Naive thymus-derived CD4-positive, alpha-beta T cell (primary cell): ENCODE measurements at regions of chr4 and their contacts with region 1.

Region 1: GRCh38 chr4:118835571-118836300 is at the start of gene SEC24D:
- DNase-seq: peak; percentile 71 to 95 (median 80)
- ATAC-seq: peak; percentile 90
- H3K4me3 ChIP-seq: peak within 1 kb of the TSS; percentile 91
- H3K4me3 Mint-ChIP-seq: peak within 1 kb of the TSS; percentile 87 to 100 (median 99)
- H3K27ac ChIP-seq: peak within 1 kb of the TSS; percentile 87
- H3K27ac Mint-ChIP-seq: peak within 1 kb of the TSS; percentile 86 to 100 (median 96)
- H3K4me1 ChIP-seq: peaks cover 0 to 5% of the 10 kb centered on the region in 2 donors
- H3K4me1 Mint-ChIP-seq: peaks cover 15 to 31% (median 20%) of the 10 kb centered on the region in 7 donors
- H3K27me3 ChIP-seq: no peaks in the 10 kb centered on the region
- H3K27me3 Mint-ChIP-seq: peaks cover 0 to 4% (median 0%) of the 10 kb centered on the region in 5 donors
- total RNA-seq, gene SEC24D: 11.5 to 59.2 (median 16.4) TPM

Region 2: DNA sequence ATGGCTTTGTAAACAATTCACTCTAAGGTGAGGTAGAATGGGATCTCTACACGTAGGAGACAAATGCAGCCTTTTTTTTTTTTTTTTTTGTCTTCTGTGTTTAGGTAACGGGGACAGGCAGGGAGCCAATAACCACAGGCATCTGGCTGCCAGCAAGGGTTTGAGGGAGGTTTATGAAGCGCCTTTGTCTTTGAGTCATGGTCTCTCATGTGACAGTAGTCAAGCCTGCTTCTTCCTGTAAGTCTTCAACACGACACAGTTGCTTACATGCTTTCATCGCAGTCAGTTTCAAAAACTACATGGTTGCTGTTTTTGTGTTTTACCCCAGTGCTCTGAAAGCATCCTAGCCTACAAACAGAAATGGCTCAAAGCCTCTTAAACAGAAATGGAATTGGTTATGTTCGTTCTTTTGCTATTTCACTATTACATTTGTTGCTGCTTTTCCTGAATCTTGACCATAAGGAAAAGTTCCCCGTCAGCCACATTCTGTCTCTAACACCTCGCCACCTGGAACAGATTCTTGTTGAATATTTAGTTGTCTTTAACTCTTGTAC is 278.4 kb before region 1 on chr4:
- CTCF ChIA-PET with region 1: no interaction called
- POLR2A ChIA-PET with region 1: no interaction called
- intact Hi-C with region 1: no loop called
- DNase-seq: no peak
- ATAC-seq: no peak
- H3K4me3 ChIP-seq: no peak overlapping the region
- H3K4me3 Mint-ChIP-seq: no peak overlapping the region
- H3K27ac ChIP-seq: no peak overlapping the region
- H3K27ac Mint-ChIP-seq: no peak overlapping the region
- H3K4me1 ChIP-seq: no peaks in the 10 kb centered on the region
- H3K4me1 Mint-ChIP-seq: no peaks in the 10 kb centered on the region
- H3K27me3 ChIP-seq: no peaks in the 10 kb centered on the region
- H3K27me3 Mint-ChIP-seq: peaks cover 0 to 11% (median 6%) of the 10 kb centered on the region in 5 donors

Region 3: DNA sequence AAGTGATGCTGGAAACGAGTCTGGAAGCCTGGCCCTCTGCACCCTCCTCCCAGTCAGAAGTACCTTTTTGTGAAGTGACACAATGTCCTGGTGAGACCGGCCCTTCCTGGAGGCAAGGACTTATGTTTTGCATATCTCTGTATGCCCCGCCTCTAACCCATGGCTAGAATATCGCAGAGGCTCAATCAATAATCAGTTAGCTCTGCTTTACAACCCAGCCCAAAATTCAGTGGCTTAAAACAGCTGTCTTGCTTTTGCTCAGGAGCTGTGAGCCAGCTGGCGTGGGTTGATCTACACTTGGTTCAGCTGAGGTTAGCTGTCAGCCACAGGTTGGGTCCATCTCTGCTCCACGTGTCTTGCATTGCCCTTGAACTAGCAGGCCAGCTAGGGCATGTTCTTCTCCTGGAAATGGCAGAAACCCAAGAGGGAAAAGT is 249.4 kb before region 1 on chr4:
- CTCF ChIA-PET with region 1: no interaction called
- POLR2A ChIA-PET with region 1: no interaction called
- intact Hi-C with region 1: loop called (anchors 2 to 5 kb)
- DNase-seq: no peak
- ATAC-seq: no peak
- H3K4me3 ChIP-seq: no peak overlapping the region
- H3K4me3 Mint-ChIP-seq: no peak overlapping the region
- H3K27ac ChIP-seq: no peak overlapping the region
- H3K27ac Mint-ChIP-seq: no peak overlapping the region
- H3K4me1 ChIP-seq: peaks cover 4 to 6% of the 10 kb centered on the region in 2 donors
- H3K4me1 Mint-ChIP-seq: peaks cover 6 to 19% (median 17%) of the 10 kb centered on the region in 7 donors
- H3K27me3 ChIP-seq: no peaks in the 10 kb centered on the region
- H3K27me3 Mint-ChIP-seq: peaks cover 2 to 37% (median 16%) of the 10 kb centered on the region in 5 donors

Region 4: DNA sequence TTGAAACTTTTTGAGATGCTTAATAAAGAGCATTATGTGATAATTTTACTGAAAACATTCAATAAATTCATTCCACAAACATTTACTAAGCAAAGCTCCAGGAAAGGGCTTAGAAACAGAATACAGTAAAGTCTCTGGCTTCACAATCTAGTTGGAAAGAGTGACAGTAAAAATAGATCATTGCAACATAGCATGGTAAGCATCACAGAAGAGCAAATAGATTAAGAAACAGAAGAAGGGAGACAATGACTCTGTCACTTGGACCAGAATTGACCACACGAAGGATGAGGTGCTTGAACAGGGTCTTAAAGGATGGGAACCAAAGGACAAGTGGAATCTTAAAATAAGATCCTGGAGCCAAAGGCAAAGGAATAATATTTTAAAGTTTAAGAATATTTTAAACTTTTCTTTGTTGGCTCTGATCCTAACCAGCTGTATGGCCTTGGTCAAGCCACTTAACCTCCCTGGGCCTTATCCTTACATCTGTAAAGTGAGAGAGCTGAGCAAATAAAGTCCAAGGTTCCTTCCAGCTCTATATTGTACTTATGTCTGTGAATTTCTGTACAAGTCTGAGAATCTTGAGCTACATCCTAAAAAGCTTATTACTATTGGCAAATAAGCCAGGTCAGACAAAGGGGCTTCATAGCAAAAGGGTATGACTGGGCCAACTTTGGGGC is 33.7 kb before region 1 on chr4:
- CTCF ChIA-PET with region 1: no interaction called
- POLR2A ChIA-PET with region 1: no interaction called
- intact Hi-C with region 1: loop called in 1 of 2 experiments (anchors 5 kb)
- DNase-seq: no peak
- ATAC-seq: no peak
- H3K4me3 ChIP-seq: no peak overlapping the region
- H3K4me3 Mint-ChIP-seq: no peak overlapping the region
- H3K27ac ChIP-seq: no peak overlapping the region
- H3K27ac Mint-ChIP-seq: peak overlapping the region in 1 of 9 donors; percentile 17
- H3K4me1 ChIP-seq: no peaks in the 10 kb centered on the region
- H3K4me1 Mint-ChIP-seq: no peaks in the 10 kb centered on the region
- H3K27me3 ChIP-seq: no peaks in the 10 kb centered on the region
- H3K27me3 Mint-ChIP-seq: no peaks in the 10 kb centered on the region

Region 5: GRCh38 chr4:118865091-118865708 is 29.5 kb after region 1 on chr4:
- CTCF ChIA-PET with region 1: no interaction called
- POLR2A ChIA-PET with region 1: no interaction called
- intact Hi-C with region 1: loop called (anchors 1 to 5 kb)
- DNase-seq: peak in 6 of 9 donors; percentile 7 to 39 (median 28)
- ATAC-seq: peak; percentile 77
- H3K4me3 ChIP-seq: no peak overlapping the region
- H3K4me3 Mint-ChIP-seq: no peak overlapping the region
- H3K27ac ChIP-seq: no peak overlapping the region
- H3K27ac Mint-ChIP-seq: no peak overlapping the region
- H3K4me1 ChIP-seq: no peaks in the 10 kb centered on the region
- H3K4me1 Mint-ChIP-seq: peaks cover 0 to 7% (median 0%) of the 10 kb centered on the region in 7 donors
- H3K27me3 ChIP-seq: no peaks in the 10 kb centered on the region
- H3K27me3 Mint-ChIP-seq: peaks cover 0 to 16% (median 0%) of the 10 kb centered on the region in 5 donors

Region 6: DNA sequence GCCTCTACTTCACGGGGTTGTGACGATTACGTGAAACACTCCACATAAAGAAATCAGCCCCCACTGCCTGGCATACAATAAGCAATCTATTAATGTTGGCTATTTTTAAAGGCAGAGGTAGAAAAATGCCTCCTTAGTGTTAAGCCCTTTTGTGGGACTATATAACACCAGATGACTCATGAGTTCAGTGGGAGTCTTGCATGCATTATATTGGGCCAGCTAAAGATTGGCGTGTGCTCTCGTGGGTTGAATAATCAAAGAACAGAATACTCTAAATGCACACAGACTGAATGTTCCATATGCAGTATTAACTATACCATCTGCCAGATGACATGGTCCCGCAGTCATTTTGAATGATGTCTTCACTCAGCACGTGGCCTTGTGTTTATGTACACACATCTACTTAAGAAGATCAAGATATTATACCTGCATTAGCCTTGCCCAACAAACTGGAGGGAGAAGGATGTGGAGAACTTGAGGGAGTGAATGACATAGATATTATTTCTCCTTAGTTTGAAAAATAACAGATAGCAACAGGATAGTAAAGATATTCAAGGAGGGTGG is 214.9 kb after region 1 on chr4:
- CTCF ChIA-PET with region 1: no interaction called
- POLR2A ChIA-PET with region 1: no interaction called
- intact Hi-C with region 1: no loop called
- DNase-seq: no peak
- ATAC-seq: no peak
- H3K4me3 ChIP-seq: no peak overlapping the region
- H3K4me3 Mint-ChIP-seq: no peak overlapping the region
- H3K27ac ChIP-seq: no peak overlapping the region
- H3K27ac Mint-ChIP-seq: no peak overlapping the region
- H3K4me1 ChIP-seq: no peaks in the 10 kb centered on the region
- H3K4me1 Mint-ChIP-seq: no peaks in the 10 kb centered on the region
- H3K27me3 ChIP-seq: no peaks in the 10 kb centered on the region
- H3K27me3 Mint-ChIP-seq: peaks cover 0 to 23% (median 0%) of the 10 kb centered on the region in 5 donors

Region 7: DNA sequence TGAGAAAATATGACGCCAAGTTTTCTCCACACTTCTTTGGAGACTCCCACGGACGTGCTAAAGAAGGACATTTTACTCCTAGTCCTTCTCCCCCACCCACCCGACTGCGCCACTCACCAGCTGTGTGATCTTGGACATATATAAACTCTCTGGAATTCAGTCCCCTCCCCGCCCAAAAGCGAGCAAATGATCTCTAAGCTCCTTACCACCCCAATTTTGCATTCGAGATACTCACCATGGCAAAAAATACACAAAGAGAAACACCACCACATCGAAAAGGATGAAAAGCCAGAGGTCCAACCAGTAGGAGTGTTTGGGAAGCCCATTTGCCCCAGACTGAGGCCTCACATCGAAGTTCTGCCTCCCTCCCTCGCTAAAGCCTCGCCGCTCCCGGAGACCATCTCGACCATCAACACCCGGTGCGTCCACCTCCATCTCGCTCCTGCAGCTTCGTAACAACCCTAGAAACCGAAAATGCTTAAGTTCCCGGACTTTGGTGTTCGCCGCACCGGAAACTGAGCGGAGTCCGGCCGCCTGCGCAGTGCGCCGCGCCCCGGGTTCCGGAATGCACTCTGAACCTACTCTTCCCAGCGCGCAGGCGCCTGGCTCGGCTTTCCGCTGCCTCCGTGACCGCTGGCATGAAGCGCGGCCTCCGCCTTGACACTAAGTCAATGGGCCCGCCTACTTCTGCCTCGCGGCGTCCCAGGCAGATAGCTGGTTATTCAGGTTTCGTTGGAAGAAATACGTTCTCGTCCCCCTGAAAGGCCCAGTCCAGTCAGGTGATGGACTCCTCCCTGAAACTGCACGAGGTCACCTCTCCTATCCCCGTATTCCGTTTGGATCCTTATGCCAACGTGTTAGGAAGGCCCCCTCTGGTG is 464.6 kb after region 1 on chr4:
- CTCF ChIA-PET with region 1: no interaction called
- POLR2A ChIA-PET with region 1: interaction called, 4 read pairs
- intact Hi-C with region 1: loop called (anchors 1 to 10 kb)
- DNase-seq: peak; percentile 84 to 94 (median 88)
- ATAC-seq: peak; percentile 97
- H3K4me3 ChIP-seq: peak overlapping the region; percentile 93
- H3K4me3 Mint-ChIP-seq: peak overlapping the region; percentile 92 to 100 (median 96)
- H3K27ac ChIP-seq: peak overlapping the region; percentile 90
- H3K27ac Mint-ChIP-seq: peak overlapping the region; percentile 98 to 100 (median 100)
- H3K4me1 ChIP-seq: peaks cover 5 to 22% of the 10 kb centered on the region in 2 donors
- H3K4me1 Mint-ChIP-seq: peaks cover 16 to 49% (median 43%) of the 10 kb centered on the region in 7 donors
- H3K27me3 ChIP-seq: no peaks in the 10 kb centered on the region
- H3K27me3 Mint-ChIP-seq: peaks cover 0 to 5% (median 0%) of the 10 kb centered on the region in 5 donors